ENCODE measurements at regions of chr4 and their contacts with region 1.

Region 1: DNA sequence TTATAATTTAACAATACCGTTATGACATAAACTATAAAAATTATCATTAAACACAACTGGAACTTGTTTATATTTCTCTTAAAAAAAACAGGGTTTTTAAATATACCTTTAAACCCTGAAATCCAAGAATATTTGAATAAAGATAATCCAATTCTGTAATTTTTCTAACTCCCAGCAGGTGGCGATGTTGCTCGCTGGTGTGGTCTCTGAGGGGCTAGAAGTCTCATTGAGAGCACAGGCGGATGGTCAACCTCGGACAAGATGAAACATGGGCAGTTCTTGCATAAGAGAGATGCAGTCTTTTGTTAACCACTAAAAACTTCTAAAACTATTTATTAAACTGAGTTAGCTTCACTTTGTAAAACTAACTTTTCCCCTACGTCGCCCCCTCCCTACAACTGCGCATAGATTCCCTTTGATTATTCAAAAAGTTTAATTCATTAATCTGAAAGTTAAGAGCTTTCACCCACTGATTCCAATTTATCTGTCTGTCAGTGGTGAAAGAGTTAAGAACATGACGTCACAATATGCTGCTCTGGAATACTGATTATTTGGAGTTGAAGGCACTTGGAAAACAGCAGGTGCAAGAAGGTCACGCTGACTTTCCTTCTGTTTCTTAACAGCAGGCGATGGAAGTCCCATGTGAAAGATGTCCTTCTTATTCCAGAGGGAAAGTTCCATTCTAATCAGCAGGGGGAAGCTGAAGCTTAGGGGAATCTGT is 29.5 kb downstream of the DMP1 start:
- DNase-seq: peak in 2 of 3 donors; percentile 4 to 27
- ATAC-seq: no peak
- H3K4me3 ChIP-seq: no peak overlapping the region
- H3K4me1 ChIP-seq: no peaks in the 10 kb centered on the region
- CTCF ChIP-seq: no peak

Region 2: GRCh38 chr4:87838890-87839591 is 159.4 kb after region 1 on chr4:
- intact Hi-C with region 1: loop called in 1 of 2 experiments (anchors 10 kb)
- DNase-seq: peak in 1 of 3 donors; percentile 18
- ATAC-seq: peak; percentile 42
- H3K4me3 ChIP-seq: no peak overlapping the region
- H3K4me1 ChIP-seq: no peaks in the 10 kb centered on the region
- CTCF ChIP-seq: peak; percentile 19

Measured in mucosa of descending colon (tissue), 3 donors.